OCI-LY7 (cell line): ENCODE measurements at regions of chr4 and their contacts with region 1.

Region 1: GRCh38 chr4:81963763-81964020 is 410.1 kb downstream of the HNRNPD start:
- DNase-seq: no peak
- H3K4me3 ChIP-seq: no peak overlapping the region
- H3K27ac ChIP-seq: no peak overlapping the region
- H3K4me1 ChIP-seq: peaks cover 39% of the 10 kb centered on the region
- CTCF ChIP-seq: no peak

Region 2: DNA sequence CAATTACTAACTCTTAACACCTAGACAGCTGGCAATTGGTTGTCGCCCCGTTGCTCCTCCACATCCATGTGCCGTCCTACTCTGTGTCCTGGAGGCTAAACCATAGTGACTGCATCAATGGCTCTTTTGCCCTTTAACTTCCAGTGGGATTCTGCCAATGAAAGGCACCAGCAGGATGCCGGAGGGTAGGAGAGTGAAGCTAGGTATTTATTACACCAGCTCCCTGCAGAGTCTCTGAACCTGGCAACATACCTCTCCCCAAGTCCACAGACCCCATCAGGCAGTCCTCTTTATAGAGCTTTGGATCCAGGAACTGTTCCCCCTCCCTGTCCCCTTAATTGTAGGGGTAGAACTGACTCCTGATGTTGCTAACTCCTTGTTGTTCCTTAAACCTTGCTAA is 16.7 kb before region 1 on chr4:
- CTCF ChIA-PET with region 1: interaction called, 3 read pairs
- POLR2A ChIA-PET with region 1: interaction called, 10 read pairs
- intact Hi-C with region 1: no loop called
- DNase-seq: no peak
- H3K4me3 ChIP-seq: no peak overlapping the region
- H3K27ac ChIP-seq: no peak overlapping the region
- H3K4me1 ChIP-seq: no peaks in the 10 kb centered on the region
- CTCF ChIP-seq: no peak

Region 3: GRCh38 chr4:82097504-82097903 is 133.8 kb after region 1 on chr4:
- CTCF ChIA-PET with region 1: no interaction called
- POLR2A ChIA-PET with region 1: no interaction called
- intact Hi-C with region 1: no loop called
- DNase-seq: no peak
- H3K4me3 ChIP-seq: no peak overlapping the region
- H3K27ac ChIP-seq: no peak overlapping the region
- H3K4me1 ChIP-seq: no peaks in the 10 kb centered on the region
- CTCF ChIP-seq: no peak